Activated naive CD4-positive, alpha-beta T cell treated with anti-CD3 and anti-CD28 coated beads for 36 hours (primary cell): ENCODE measurements at regions of chr3 and their contacts with region 1.

Region 1: GRCh38 chr3:79086514-79086913 is 681.3 kb downstream of the ROBO1 start:
- DNase-seq: peak; percentile 32
- H3K4me3 Mint-ChIP-seq: no peak overlapping the region
- H3K27ac Mint-ChIP-seq: no peak overlapping the region
- H3K4me1 Mint-ChIP-seq: no peaks in the 10 kb centered on the region
- H3K27me3 Mint-ChIP-seq: no peaks in the 10 kb centered on the region

Region 2: GRCh38 chr3:79286882-79287281 is 200.4 kb after region 1 on chr3:
- CTCF ChIA-PET with region 1: no interaction called
- intact Hi-C with region 1: no loop called
- DNase-seq: no peak
- H3K4me3 Mint-ChIP-seq: no peak overlapping the region
- H3K27ac Mint-ChIP-seq: no peak overlapping the region
- H3K4me1 Mint-ChIP-seq: no peaks in the 10 kb centered on the region
- H3K27me3 Mint-ChIP-seq: no peaks in the 10 kb centered on the region

Region 3: DNA sequence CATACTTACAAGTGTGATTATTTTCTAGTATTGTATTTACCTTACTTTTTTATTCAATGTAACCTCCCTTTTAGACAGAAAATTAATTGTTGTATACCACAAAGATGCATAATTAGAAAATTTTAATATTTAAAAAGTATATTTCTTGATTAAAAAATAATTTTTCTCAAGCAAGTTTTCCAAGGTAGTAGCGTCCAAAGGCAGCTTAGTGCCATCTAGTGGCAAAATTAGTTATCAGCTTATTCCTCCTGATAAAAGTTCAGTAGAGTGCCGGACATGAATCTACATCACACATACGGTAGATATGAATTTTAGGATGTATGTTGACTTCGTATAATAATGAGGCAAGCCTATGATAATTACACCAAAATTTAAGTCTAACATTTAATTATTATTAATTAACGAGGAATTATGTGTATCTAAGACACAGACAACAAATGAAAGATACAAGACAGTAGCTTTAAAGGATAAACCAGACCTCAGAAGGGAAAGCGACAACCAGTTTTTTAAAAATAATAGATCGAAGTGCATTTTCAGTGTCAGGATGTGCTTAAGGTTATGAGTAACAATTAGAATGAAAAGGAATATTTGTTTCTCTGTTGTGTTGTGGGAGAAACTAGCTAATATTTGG is 275.3 kb after region 1 on chr3:
- CTCF ChIA-PET with region 1: no interaction called
- intact Hi-C with region 1: loop called (anchors 5 kb)
- DNase-seq: no peak
- H3K4me3 Mint-ChIP-seq: no peak overlapping the region
- H3K27ac Mint-ChIP-seq: no peak overlapping the region
- H3K4me1 Mint-ChIP-seq: no peaks in the 10 kb centered on the region
- H3K27me3 Mint-ChIP-seq: no peaks in the 10 kb centered on the region

Region 4: GRCh38 chr3:79497447-79498111 is 411.1 kb after region 1 on chr3:
- CTCF ChIA-PET with region 1: no interaction called
- intact Hi-C with region 1: loop called (anchors 1 kb)
- DNase-seq: no peak
- H3K4me3 Mint-ChIP-seq: no peak overlapping the region
- H3K27ac Mint-ChIP-seq: no peak overlapping the region
- H3K4me1 Mint-ChIP-seq: no peaks in the 10 kb centered on the region
- H3K27me3 Mint-ChIP-seq: no peaks in the 10 kb centered on the region